Posterior vena cava (tissue), 2 donors: ENCODE measurements at regions of chr13 and their contacts with region 1.

Region 1: GRCh38 chr13:102845630-102846260 is at the start of gene ERCC5:
- DNase-seq: peak; percentile 98
- total RNA-seq, gene ERCC5: 26.6 to 30.3 TPM

Region 2: DNA sequence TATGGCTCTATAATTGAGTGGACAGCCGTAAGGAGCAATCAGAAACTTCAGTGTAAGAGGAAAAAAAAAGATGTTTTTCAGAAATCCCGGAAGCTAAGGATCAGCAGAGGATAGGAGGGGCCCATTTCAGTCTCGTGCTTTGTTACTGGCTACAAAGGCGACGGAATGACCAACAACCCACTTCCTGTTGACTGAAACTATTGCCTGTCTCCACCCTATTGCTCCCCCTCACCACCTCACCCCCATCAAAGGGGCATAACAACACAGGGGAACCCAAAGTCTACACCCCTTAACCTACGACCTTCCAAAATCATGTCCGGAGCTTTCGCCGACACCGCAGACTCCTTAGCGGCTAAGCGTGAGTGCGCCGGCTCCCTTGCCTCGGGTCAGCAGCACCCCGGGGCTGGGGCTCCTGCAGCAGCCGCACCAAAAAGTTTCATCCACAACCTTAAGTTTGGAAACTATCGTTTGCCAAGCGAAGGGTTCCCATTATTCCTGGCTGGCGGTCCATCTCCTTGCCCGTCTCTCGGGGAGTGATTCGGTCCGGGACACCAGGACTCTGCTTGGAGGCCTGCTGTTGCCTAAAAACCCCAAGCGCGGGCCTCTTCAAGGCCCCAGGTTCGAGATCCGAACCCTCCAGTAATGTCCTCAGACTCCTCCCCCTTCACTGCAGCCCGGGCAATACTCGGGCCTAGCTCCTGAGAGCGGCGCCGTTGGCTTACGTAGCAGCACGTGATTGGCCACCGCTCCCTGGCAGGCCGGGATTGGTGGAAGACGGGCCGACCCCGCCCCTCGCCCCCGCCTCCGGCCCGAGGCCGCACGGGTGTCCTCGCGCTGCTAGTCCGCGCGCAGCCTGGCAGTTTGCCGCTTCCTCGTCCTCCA is 249.4 kb before region 1 on chr13 and contains the start of gene TPP2:
- intact Hi-C with region 1: loop called in 1 of 2 experiments (anchors 5 kb)
- DNase-seq: peak; percentile 100
- total RNA-seq, gene TPP2: 32.7 to 37.2 TPM

Region 3: GRCh38 chr13:102798581-102799425 is 46.9 kb before region 1 on chr13 and contains the starts of genes BIVM and POGLUT2:
- intact Hi-C with region 1: loop called in 1 of 2 experiments (anchors 5 kb)
- DNase-seq: peak; percentile 96
- total RNA-seq, gene BIVM: 15.3 to 16.8 TPM
- total RNA-seq, gene POGLUT2: 6.2 to 9.9 TPM